ENCODE measurements at regions of chr1 and their contacts with region 1.

Region 1: GRCh38 chr1:19651141-19651737 is 7.1 kb downstream of the NBL1 start:
- DNase-seq: peak; percentile 81
- ATAC-seq: peak; percentile 88

Region 2: GRCh38 chr1:19251305-19252196 is 399.7 kb before region 1 on chr1 and contains the starts of genes EMC1 and MRTO4:
- intact Hi-C with region 1: loop called (anchors 5 kb)
- DNase-seq: peak; percentile 94
- ATAC-seq: peak; percentile 97
- total RNA-seq, gene EMC1: 30.5 TPM
- total RNA-seq, gene MRTO4: 12.1 TPM

Region 3: DNA sequence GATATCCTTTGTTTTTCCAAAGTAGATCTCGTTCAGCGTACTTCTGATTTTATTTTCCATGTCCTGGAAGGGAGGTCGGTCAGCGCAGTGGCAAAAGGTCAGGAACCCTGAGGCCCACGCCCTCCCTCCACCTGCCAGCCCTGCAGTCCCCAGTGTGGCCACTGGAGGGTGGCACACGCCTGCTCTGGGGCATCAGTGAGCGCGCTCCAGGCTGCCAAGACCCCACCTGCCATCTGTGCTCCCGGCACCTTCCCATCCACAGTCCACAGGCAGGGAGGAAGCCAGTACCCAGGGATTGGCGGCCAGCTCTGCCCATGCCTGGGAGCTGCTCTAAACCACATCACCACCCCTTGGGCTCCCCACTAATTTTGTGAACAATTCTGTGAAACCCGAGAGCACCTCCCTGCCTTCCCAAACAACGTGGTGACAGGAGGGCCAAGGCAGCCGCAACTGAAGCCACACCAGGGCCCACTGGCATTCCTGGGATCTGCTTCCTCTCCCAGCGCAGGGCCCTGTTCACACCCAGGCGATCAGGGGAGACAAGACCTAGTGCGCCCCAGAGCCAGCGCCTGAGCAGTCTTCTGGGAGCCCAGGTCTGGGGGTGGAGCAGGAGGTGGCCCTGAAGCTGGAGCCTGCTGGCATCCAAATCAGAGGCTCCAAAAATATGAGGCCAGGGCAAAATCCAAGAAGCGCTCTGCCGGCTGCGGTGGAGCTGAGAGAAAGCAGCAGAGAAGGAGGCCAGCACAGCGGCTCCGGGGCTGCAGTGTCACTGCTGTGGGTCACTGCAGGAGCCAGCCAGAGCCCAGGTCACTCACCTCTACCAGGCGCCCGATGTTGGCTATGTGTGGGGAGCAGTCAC is 306.6 kb before region 1 on chr1:
- intact Hi-C with region 1: loop called (anchors 1 kb)
- DNase-seq: peak; percentile 79
- ATAC-seq: peak; percentile 77